ENCODE measurements at regions of chr1 and their contacts with region 1.

Region 1: DNA sequence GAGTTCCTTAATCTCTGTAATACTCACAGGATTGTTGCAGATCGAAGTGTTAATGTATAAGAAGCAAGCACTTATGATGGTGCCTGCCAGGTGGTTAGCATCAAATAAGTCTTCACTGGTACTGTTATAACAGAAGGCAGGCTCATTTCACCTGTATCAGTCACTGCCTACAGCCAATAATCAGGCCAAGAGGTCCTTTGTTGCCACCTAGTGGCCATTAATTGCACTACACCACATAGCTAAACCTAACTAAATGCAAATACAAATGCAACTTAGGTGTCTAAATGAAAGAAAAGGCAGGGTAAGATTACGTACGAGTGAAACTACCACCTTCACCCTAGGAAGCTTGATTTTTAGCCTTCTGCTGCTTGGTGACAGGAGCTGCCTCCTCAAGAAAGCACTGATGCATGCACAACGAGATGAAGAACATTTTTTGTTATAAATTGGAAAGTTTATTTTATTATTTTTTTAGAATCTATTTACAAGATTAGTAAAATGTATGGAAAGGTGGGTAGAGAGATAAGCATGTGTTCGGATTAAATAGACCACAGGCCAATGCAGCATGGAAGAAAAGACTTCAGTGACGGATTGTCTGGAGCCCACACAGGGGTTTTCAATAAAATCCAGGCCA is 334.8 kb upstream of the CAMK1G start:
- DNase-seq: peak; percentile 62
- ATAC-seq: peak; percentile 88
- H3K4me3 Mint-ChIP-seq: no peak overlapping the region
- H3K27ac Mint-ChIP-seq: peak overlapping the region; percentile 81
- H3K4me1 Mint-ChIP-seq: peaks cover 41% of the 10 kb centered on the region
- H3K27me3 Mint-ChIP-seq: no peaks in the 10 kb centered on the region
- CTCF ChIP-seq: peak; percentile 86

Region 2: GRCh38 chr1:209219791-209220524 is 28.8 kb before region 1 on chr1:
- CTCF ChIA-PET with region 1: no interaction called
- POLR2A ChIA-PET with region 1: no interaction called
- DNase-seq: no peak
- ATAC-seq: no peak
- H3K4me3 Mint-ChIP-seq: no peak overlapping the region
- H3K27ac Mint-ChIP-seq: no peak overlapping the region
- H3K4me1 Mint-ChIP-seq: no peaks in the 10 kb centered on the region
- H3K27me3 Mint-ChIP-seq: no peaks in the 10 kb centered on the region
- CTCF ChIP-seq: no peak

Region 3: GRCh38 chr1:209266590-209267172 is 17.9 kb after region 1 on chr1:
- CTCF ChIA-PET with region 1: interaction called, 10 read pairs
- POLR2A ChIA-PET with region 1: no interaction called
- DNase-seq: no peak
- ATAC-seq: no peak
- H3K4me3 Mint-ChIP-seq: no peak overlapping the region
- H3K27ac Mint-ChIP-seq: no peak overlapping the region
- H3K4me1 Mint-ChIP-seq: peaks cover 7% of the 10 kb centered on the region
- H3K27me3 Mint-ChIP-seq: no peaks in the 10 kb centered on the region
- CTCF ChIP-seq: no peak

Region 4: GRCh38 chr1:209435654-209436566 is 187.1 kb after region 1 on chr1:
- CTCF ChIA-PET with region 1: interaction called, 19 read pairs
- POLR2A ChIA-PET with region 1: no interaction called
- DNase-seq: peak; percentile 96
- ATAC-seq: peak; percentile 72
- H3K4me3 Mint-ChIP-seq: no peak overlapping the region
- H3K27ac Mint-ChIP-seq: no peak overlapping the region
- H3K4me1 Mint-ChIP-seq: peaks cover 50% of the 10 kb centered on the region
- H3K27me3 Mint-ChIP-seq: peaks cover 2% of the 10 kb centered on the region; the same call in 1 of the 2 replicates
- CTCF ChIP-seq: peak; percentile 94

Region 5: DNA sequence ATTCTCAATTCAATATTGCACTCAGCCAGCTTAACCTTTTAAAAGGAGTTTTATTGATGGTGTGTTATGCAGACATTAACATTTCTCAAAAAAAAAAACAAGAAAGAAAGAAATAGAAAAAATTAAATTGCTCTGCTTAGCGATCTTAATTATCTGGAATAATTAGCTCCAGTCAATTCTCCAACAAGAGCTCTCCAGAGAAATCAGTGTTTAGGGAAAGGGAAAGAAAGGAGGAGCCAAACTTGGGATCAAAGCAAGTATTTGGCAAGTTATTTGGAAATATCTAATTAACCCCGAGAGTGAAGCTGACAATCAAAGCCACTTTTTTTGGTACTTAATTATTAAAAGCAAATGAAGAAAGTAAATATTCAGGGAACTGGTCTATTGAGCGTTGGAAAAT is 274.1 kb after region 1 on chr1:
- CTCF ChIA-PET with region 1: no interaction called
- POLR2A ChIA-PET with region 1: no interaction called
- DNase-seq: no peak
- ATAC-seq: no peak
- H3K4me3 Mint-ChIP-seq: no peak overlapping the region
- H3K27ac Mint-ChIP-seq: no peak overlapping the region
- H3K4me1 Mint-ChIP-seq: no peaks in the 10 kb centered on the region
- H3K27me3 Mint-ChIP-seq: no peaks in the 10 kb centered on the region; the same call in 1 of the 2 replicates
- CTCF ChIP-seq: no peak